GM10248 (cell line): ENCODE measurements at regions of chr7 and their contacts with region 1.

Region 1: DNA sequence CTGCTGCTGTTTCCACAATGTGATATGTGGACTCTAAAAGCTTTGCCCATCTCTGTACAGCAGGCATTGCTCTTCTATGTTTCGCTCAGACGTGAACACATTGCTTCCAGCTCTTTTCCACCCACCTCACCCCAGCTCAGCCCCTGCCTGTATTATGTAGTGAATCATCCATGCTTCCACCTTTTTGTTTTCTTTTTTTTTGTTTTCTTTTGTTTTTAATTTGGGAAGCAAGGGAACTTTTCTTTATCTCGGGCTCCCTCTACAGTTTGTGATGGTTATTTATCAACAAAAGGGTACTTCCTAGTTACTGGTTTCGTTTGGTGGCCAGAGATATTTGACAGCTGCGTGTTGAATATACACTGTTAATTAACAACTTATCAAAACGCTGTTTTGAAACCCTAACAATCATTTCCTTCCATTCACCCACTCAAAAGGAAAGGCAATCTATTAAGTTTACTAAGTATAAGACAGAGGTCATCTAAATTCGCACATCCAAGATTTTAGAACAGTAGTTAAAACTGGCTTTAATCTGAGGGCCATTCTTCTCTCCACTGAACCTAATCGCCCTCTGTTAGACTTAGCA is 127.9 kb upstream of the STK17A start:
- DNase-seq: peak; percentile 66
- CTCF ChIP-seq: peak; percentile 52

Region 2: GRCh38 chr7:43465581-43466554 is 10.8 kb after region 1 on chr7:
- CTCF ChIA-PET with region 1: interaction called, 29 read pairs
- POLR2A ChIA-PET with region 1: no interaction called
- DNase-seq: no peak
- CTCF ChIP-seq: no peak